Endothelial cell of umbilical vein (primary cell): ENCODE measurements at regions of chr18 and their contacts with region 1.

Region 1: GRCh38 chr18:6521795-6522418 is 107.2 kb upstream of the L3MBTL4 start:
- DNase-seq: peak; percentile 52
- H3K4me3 ChIP-seq: no peak overlapping the region
- H3K27ac ChIP-seq: no peak overlapping the region
- H3K4me1 ChIP-seq: no peaks in the 10 kb centered on the region
- H3K27me3 ChIP-seq: no peaks in the 10 kb centered on the region
- CTCF ChIP-seq: peak; percentile 68 to 79
- POLR2A ChIP-seq: no peak

Region 2: GRCh38 chr18:6509832-6510231 is 12.1 kb before region 1 on chr18:
- CTCF ChIA-PET with region 1: interaction called, 10 read pairs
- POLR2A ChIA-PET with region 1: no interaction called
- dilution Hi-C with region 1: no loop called
- intact Hi-C with region 1: no loop called
- DNase-seq: no peak
- H3K4me3 ChIP-seq: no peak overlapping the region
- H3K27ac ChIP-seq: no peak overlapping the region
- H3K4me1 ChIP-seq: no peaks in the 10 kb centered on the region
- H3K27me3 ChIP-seq: no peaks in the 10 kb centered on the region
- CTCF ChIP-seq: no peak
- POLR2A ChIP-seq: no peak

Region 3: GRCh38 chr18:6537475-6537874 is 15.6 kb after region 1 on chr18:
- CTCF ChIA-PET with region 1: interaction called, 14 read pairs
- POLR2A ChIA-PET with region 1: no interaction called
- dilution Hi-C with region 1: no loop called
- intact Hi-C with region 1: no loop called
- DNase-seq: no peak
- H3K4me3 ChIP-seq: no peak overlapping the region
- H3K27ac ChIP-seq: no peak overlapping the region
- H3K4me1 ChIP-seq: peaks cover 9% of the 10 kb centered on the region
- H3K27me3 ChIP-seq: no peaks in the 10 kb centered on the region
- CTCF ChIP-seq: no peak
- POLR2A ChIP-seq: no peak

Region 4: DNA sequence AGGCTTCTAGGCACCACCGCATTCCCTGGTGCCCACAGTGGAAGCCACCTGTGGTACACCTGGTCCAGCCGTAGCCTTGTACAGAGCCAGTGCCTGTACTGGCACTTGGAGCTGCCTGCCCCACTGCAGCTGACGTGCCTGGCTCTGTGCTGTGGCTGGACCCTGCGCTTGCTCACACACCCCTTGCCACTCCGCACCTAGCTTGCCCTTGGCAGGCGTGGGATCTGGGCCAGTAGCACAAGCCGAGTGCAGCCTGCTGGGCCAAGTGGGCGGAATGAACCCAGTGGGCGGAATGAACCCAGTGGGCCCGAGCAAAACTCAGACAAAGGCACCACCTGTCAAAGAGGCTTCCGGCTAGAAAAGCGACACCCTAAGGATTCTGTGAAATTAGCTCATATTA is 333.9 kb after region 1 on chr18:
- CTCF ChIA-PET with region 1: no interaction called
- POLR2A ChIA-PET with region 1: no interaction called
- dilution Hi-C with region 1: no loop called
- intact Hi-C with region 1: no loop called
- DNase-seq: no peak
- H3K4me3 ChIP-seq: no peak overlapping the region
- H3K27ac ChIP-seq: no peak overlapping the region
- H3K4me1 ChIP-seq: no peaks in the 10 kb centered on the region
- H3K27me3 ChIP-seq: no peaks in the 10 kb centered on the region
- CTCF ChIP-seq: no peak
- POLR2A ChIP-seq: no peak